SK-N-SH (cell line): ENCODE measurements at regions of chr9 and their contacts with region 1.

Region 1: GRCh38 chr9:100426530-100427428 is at the start of gene MSANTD3:
- DNase-seq: peak; percentile 94
- H3K4me3 ChIP-seq: peak within 1 kb of the TSS; percentile 73 to 88
- H3K27ac ChIP-seq: peak within 1 kb of the TSS; percentile 92 to 99
- H3K4me1 ChIP-seq: peaks cover 9 to 22% of the 10 kb centered on the region in 2 experiments; a peak in 3 of 4 replicates
- H3K27me3 ChIP-seq: no peaks in the 10 kb centered on the region
- CTCF ChIP-seq: peak; percentile 13; the same call in 1 of the 2 replicates
- EP300 ChIP-seq: peak in 1 of 2 experiments; percentile 14; a peak in 1 of 4 replicates
- RAD21 ChIP-seq: 0 out of 2 replicates have a peak, but pooled peaks have one; percentile 1
- polyA plus RNA-seq, gene MSANTD3: 42.3 and 48.3 TPM in 2 replicates

Region 2: DNA sequence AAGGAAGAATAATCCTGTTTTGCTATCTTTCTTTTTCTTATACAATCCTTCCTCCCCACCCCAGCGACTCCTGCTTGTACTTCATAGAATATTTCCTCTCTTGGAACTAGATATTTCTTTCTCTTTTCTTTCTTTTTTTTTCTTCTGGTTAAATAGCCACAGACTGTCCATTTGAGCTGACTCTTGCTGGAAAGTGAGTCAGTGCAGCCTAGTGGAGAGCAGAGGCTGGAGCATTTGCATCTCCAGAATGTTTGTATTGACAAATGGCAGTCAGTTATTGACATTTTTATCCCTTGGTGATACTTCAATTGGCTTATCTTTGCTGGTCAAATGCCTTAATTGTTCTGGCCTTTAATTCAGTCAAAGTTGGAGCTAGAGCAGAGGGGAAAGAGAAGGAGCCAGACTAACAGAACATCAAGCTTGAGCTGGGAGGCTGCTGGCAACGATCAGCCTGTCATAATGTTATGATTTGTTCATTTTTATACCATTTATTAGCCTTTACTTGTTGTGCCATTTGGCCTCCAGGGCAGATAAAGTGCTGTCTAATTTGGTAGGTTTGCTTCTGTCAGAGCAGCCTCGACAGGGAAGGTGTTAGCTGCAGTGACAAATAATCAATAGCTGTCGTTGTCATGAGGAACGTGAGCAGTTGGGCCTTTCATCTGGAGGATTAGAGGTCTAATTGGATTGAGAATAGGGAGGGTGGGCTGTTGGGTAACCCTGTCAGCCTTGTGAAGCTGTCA is 258.7 kb before region 1 on chr9:
- CTCF ChIA-PET with region 1: no interaction called
- POLR2A ChIA-PET with region 1: no interaction called
- DNase-seq: no peak
- H3K4me3 ChIP-seq: no peak overlapping the region
- H3K27ac ChIP-seq: no peak overlapping the region
- H3K4me1 ChIP-seq: peaks cover 0 to 5% of the 10 kb centered on the region in 2 experiments; a peak in 2 of 4 replicates
- H3K27me3 ChIP-seq: no peaks in the 10 kb centered on the region
- CTCF ChIP-seq: no peak
- EP300 ChIP-seq: no peak
- RAD21 ChIP-seq: peak; percentile 37

Region 3: GRCh38 chr9:100411472-100412283 is 15.1 kb before region 1 on chr9:
- CTCF ChIA-PET with region 1: interaction called, 4 read pairs
- POLR2A ChIA-PET with region 1: interaction called, 14 read pairs
- DNase-seq: peak; percentile 94
- H3K4me3 ChIP-seq: peak overlapping the region; percentile 56 to 60
- H3K27ac ChIP-seq: peak overlapping the region in 1 of 2 experiments; percentile 70; a peak in 3 of 4 replicates
- H3K4me1 ChIP-seq: peaks cover 0 to 8% of the 10 kb centered on the region in 2 experiments; a peak in 1 of 4 replicates
- H3K27me3 ChIP-seq: no peaks in the 10 kb centered on the region
- CTCF ChIP-seq: no peak
- EP300 ChIP-seq: no peak
- RAD21 ChIP-seq: no peak

Region 4: GRCh38 chr9:100505564-100506159 is 78.9 kb after region 1 on chr9:
- CTCF ChIA-PET with region 1: no interaction called
- POLR2A ChIA-PET with region 1: no interaction called
- DNase-seq: peak; percentile 34
- H3K4me3 ChIP-seq: peak overlapping the region in 1 of 2 experiments; percentile 27; a peak in 1 of 4 replicates
- H3K27ac ChIP-seq: no peak overlapping the region
- H3K4me1 ChIP-seq: no peaks in the 10 kb centered on the region
- H3K27me3 ChIP-seq: no peaks in the 10 kb centered on the region
- CTCF ChIP-seq: peak; percentile 75
- EP300 ChIP-seq: no peak
- RAD21 ChIP-seq: peak; percentile 39; the same call in 1 of the 2 replicates